ENCODE measurements at regions of chr10 and their contacts with region 1.

Region 1: DNA sequence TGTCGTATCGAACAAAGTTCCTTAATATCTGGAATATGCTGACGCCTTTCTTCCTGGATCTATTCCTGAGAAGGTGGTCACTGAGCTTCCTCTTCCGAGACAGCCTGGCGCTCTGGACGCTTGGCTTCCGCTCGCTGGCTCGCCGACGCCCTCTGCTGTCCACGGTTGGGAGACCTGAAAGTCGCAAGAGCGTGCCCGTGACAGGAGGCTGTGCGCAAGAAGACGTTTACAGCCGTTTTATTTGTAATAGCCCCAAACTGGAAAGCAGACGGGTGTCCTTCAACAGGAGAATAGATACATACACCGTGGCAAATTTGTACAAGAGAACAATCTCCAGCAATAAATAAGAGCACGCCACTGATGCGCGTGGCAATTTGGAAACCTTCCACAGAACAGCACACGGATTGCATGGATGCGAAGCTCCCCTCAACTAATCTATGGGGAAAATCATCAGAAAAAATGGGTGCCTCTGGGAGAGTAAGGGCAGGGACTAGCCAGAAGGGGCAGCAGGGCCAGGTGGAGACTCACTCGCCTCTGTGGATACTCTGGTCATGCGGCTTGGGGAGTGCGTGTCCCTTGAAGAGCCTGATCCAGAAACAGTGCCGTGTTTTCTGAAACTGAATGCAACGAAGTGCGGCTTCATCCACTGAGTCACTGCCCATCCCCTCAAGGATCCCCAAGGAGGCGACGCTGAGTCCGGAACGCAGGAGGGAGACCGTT is 41.5 kb upstream of the BNIP3 start:
- DNase-seq: peak; percentile 84
- H3K4me3 ChIP-seq: peak overlapping the region; percentile 24 to 43
- H3K27ac ChIP-seq: no peak overlapping the region
- H3K4me1 ChIP-seq: peaks cover 0 to 9% of the 10 kb centered on the region in 2 experiments; a peak in 1 of 4 replicates
- H3K27me3 ChIP-seq: no peaks in the 10 kb centered on the region; the same call in 1 of the 2 replicates
- CTCF ChIP-seq: peak; percentile 88
- EP300 ChIP-seq: no peak
- RAD21 ChIP-seq: peak; percentile 90

Region 2: DNA sequence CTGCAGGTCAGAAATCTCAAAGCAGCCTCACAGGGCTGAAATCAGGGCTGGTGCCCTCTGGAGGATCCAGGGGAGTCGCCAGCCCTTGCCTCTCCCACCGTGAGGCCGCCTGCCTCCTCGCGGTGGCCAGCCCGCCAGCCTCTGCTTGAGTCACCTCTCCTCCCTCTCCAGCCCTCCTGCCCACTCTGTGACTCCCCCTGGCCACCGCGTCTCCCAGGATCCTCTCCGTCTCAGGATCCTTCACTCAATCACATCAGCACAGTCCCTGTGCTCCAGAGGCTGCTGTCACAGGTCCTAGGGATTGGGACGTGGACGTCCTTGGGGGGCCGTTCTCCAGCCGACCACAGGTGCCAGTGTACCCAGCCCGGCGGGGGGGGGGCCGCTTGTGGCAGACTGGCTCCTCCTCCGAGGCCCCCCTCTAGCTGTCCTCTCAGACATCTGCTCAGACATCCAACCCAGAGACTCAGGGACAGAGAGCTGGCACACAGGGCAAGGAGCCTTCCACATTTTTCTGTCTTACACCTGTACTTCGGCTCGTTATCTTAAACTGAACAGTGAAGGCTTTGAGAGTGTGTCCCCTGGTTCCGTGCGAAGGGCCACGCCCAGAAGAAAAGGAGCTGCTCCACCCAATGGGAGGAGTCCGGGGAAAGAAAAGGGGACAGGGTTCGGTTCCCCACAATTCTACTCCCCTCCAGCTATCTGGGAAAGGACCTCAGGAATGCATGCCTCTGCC is 131.9 kb before region 1 on chr10:
- CTCF ChIA-PET with region 1: interaction called, 78 read pairs
- POLR2A ChIA-PET with region 1: no interaction called
- DNase-seq: peak; percentile 68
- H3K4me3 ChIP-seq: no peak overlapping the region
- H3K27ac ChIP-seq: no peak overlapping the region
- H3K4me1 ChIP-seq: no peaks in the 10 kb centered on the region
- H3K27me3 ChIP-seq: peaks cover 4% of the 10 kb centered on the region; the same call in 1 of the 2 replicates
- CTCF ChIP-seq: no peak
- EP300 ChIP-seq: no peak
- RAD21 ChIP-seq: no peak

Region 3: GRCh38 chr10:131943021-131943814 is 80.0 kb before region 1 on chr10:
- CTCF ChIA-PET with region 1: interaction called, 11 read pairs
- POLR2A ChIA-PET with region 1: no interaction called
- DNase-seq: peak; percentile 69
- H3K4me3 ChIP-seq: no peak overlapping the region
- H3K27ac ChIP-seq: no peak overlapping the region; a peak in 1 of 4 replicates
- H3K4me1 ChIP-seq: peaks cover 0 to 25% of the 10 kb centered on the region in 2 experiments; a peak in 3 of 4 replicates
- H3K27me3 ChIP-seq: no peaks in the 10 kb centered on the region
- CTCF ChIP-seq: peak; percentile 42
- EP300 ChIP-seq: no peak
- RAD21 ChIP-seq: peak; percentile 34

Region 4: DNA sequence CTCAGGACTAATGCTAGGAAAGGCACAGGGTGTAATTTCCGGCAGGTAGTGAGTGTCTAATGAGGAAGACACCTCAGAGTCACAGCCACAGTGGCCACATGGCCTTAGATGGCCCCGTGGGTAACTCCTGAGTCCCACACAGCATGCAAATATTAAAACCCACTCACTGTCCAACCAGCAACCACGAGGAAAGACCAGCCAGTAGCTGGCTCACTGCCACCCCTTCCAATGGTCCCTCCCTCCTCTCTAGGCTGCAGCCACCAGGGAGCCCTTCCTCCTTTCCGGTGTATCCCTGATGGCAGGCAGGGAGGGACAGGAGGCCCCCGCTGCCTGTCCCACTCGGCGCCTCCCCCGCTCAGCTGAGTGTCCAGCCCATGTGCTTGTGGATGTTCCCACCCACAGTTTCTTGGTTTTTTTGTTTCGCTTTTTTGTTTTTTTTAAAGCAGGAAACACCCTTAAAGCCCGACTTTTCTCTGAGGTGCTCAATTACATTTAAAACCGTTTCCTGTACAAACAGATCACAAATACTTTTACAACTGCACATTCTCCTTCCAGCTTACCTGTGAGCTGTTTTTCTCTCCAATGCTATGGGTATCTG is 50.7 kb before region 1 on chr10:
- CTCF ChIA-PET with region 1: interaction called, 17 read pairs
- POLR2A ChIA-PET with region 1: no interaction called
- DNase-seq: peak; percentile 77
- H3K4me3 ChIP-seq: no peak overlapping the region
- H3K27ac ChIP-seq: peak overlapping the region in 1 of 2 experiments; percentile 39; a peak in 2 of 4 replicates
- H3K4me1 ChIP-seq: peaks cover 0 to 20% of the 10 kb centered on the region in 2 experiments; a peak in 2 of 4 replicates
- H3K27me3 ChIP-seq: no peaks in the 10 kb centered on the region
- CTCF ChIP-seq: no peak
- EP300 ChIP-seq: no peak
- RAD21 ChIP-seq: no peak

Region 5: DNA sequence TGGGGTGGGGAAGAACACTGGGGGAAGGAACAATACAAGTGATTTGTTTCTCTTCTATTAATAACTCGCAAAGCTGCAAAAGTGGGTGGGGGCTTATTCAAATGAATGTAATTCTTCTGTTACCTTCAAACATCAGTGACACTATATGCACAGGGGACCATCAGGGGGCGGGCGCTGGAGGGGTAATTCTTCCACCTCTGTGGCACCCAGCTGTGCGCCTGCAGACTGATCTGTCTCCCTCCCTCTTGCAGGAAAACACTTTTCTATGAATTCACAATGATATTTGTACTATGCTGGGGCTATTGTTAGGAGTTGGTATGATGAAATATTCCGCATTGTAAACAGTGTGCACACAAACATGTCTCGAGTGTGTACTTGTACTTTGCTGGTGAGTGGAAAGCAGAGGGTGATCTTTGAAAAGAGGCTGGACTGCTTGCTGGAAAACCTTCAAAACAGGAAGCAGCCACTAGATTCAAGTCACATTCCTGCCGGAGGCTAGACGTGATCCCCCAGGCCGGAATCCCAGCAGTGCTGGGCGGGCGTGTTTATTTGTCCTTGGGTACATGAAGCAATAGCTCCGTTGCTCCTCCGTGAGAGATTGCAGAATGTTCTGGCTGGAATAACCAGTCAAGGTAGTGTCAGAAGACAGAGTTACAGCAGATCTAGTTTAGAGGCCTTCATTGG is 25.7 kb before region 1 on chr10:
- CTCF ChIA-PET with region 1: interaction called, 39 read pairs
- POLR2A ChIA-PET with region 1: no interaction called
- DNase-seq: no peak
- H3K4me3 ChIP-seq: no peak overlapping the region
- H3K27ac ChIP-seq: no peak overlapping the region
- H3K4me1 ChIP-seq: no peaks in the 10 kb centered on the region; a peak in 1 of 4 replicates
- H3K27me3 ChIP-seq: no peaks in the 10 kb centered on the region; the same call in 1 of the 2 replicates
- CTCF ChIP-seq: no peak
- EP300 ChIP-seq: no peak
- RAD21 ChIP-seq: no peak

Region 6: GRCh38 chr10:132036153-132036886 is 13.1 kb after region 1 on chr10:
- CTCF ChIA-PET with region 1: interaction called, 23 read pairs
- POLR2A ChIA-PET with region 1: interaction called, 3 read pairs
- DNase-seq: peak; percentile 85
- H3K4me3 ChIP-seq: peak overlapping the region in 1 of 2 experiments; percentile 27; a peak in 1 of 4 replicates
- H3K27ac ChIP-seq: no peak overlapping the region
- H3K4me1 ChIP-seq: peaks cover 0 to 3% of the 10 kb centered on the region in 2 experiments; a peak in 1 of 4 replicates
- H3K27me3 ChIP-seq: peaks cover 12% of the 10 kb centered on the region; the same call in 1 of the 2 replicates
- CTCF ChIP-seq: no peak
- EP300 ChIP-seq: no peak
- RAD21 ChIP-seq: no peak

Region 7: DNA sequence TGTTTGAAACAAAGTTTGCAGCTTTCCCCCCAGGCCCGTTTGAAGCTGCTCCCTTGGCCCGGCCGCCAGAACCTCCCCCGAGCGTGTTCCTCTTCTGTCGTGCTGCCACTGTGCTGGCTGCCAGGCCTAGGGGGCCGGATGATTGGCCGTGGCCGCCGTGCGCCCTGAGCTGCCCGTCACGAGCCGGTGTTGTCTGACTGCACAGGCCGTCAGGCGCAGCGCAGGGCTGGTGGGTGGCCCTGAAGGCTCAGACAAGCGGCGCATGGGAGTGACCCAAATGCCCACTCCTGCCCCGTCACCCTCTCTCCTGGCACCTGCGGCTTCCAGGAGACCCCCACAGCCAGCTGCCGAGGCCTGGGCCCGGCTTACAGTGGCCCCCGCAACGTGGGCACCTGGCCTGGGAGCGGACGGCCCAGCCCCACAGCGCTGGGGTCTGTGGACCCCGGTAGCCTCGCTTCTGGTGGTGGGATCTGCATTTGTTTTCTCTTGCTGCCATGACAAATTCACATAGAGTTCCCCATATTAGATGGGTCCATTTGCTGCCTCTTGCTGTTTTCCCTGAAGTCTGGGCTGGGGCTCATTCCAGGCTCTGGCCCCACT is 55.6 kb after region 1 on chr10:
- CTCF ChIA-PET with region 1: no interaction called
- POLR2A ChIA-PET with region 1: no interaction called
- DNase-seq: no peak
- H3K4me3 ChIP-seq: no peak overlapping the region
- H3K27ac ChIP-seq: no peak overlapping the region
- H3K4me1 ChIP-seq: no peaks in the 10 kb centered on the region
- H3K27me3 ChIP-seq: no peaks in the 10 kb centered on the region
- CTCF ChIP-seq: no peak
- EP300 ChIP-seq: no peak
- RAD21 ChIP-seq: no peak

Measured in SK-N-SH (cell line).